Right ventricle myocardium superior (tissue), 1 donor: ENCODE measurements at regions of chr2 and their contacts with region 1.

Region 1: GRCh38 chr2:235106874-235107639 is 155.2 kb downstream of the SH3BP4 start:
- DNase-seq: peak; percentile 69
- ATAC-seq: peak; percentile 80

Region 2: GRCh38 chr2:234550511-234551107 is 556.4 kb before region 1 on chr2:
- intact Hi-C with region 1: loop called (anchors 5 kb)
- DNase-seq: peak; percentile 51
- ATAC-seq: peak; percentile 83

Region 3: DNA sequence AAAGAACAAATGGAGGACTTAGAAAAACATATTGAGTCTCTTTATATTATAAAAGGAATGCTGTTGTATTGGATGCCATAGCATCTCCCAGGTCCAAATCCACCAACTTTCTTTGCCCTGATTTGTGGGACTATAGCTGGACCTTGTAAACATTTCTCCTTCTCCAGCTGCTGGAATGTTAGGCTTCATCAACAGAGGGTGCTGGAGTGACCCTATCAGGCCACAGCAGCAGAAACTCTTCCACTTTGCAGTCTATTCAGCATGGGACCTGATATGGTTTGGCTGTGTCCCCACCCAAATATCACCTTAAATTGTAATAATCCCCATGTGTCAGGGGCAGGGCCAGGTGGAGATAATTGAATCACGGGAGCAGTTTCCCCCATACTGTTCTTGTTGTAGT is 471.8 kb before region 1 on chr2:
- intact Hi-C with region 1: no loop called
- DNase-seq: no peak
- ATAC-seq: no peak

Region 4: DNA sequence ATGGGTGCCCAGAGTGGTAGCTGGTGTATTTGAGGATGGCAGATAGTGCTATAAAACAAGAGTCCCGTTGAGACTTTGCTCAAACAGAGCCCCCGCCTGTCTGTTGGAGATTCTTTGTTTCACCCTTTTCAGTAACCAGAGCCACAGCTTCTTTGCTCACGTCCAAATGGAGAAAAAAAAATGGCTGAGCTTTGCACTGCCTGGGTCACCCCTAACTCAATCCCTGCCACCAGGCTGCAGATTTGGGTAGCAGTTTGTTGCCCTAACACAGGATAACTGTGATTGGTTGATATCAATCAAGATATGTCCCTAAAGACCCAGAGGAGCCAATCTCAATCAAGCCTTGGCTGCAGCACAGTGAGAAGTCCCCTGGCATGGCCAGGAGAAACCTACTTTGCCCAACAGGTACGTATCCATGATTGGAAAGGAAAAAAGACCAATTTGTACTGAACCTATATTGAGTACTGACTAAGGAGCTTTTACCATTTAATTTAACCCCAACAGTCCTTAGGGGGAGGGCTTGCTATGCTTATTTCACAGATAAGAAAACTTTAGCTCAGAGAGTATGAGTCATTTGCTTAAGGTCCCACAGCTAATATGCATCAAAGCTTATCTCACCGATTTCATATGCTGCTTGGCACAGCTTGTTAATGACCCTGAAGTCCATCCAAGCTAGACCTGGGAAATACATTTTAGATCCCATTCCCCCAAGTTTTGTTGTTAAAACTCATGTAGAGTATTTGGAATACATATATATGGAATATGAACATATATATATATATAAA is 227.2 kb before region 1 on chr2:
- intact Hi-C with region 1: loop called (anchors 10 kb)
- DNase-seq: no peak
- ATAC-seq: no peak

Region 5: GRCh38 chr2:235005603-235006259 is 101.3 kb before region 1 on chr2:
- intact Hi-C with region 1: loop called (anchors 5 kb)
- DNase-seq: peak; percentile 74
- ATAC-seq: peak; percentile 81